Activated CD4-positive, alpha-beta T cell treated with anti-CD3 and anti-CD28 coated beads for 36 hours (primary cell): ENCODE measurements at regions of chr20 and their contacts with region 1.

Region 1: DNA sequence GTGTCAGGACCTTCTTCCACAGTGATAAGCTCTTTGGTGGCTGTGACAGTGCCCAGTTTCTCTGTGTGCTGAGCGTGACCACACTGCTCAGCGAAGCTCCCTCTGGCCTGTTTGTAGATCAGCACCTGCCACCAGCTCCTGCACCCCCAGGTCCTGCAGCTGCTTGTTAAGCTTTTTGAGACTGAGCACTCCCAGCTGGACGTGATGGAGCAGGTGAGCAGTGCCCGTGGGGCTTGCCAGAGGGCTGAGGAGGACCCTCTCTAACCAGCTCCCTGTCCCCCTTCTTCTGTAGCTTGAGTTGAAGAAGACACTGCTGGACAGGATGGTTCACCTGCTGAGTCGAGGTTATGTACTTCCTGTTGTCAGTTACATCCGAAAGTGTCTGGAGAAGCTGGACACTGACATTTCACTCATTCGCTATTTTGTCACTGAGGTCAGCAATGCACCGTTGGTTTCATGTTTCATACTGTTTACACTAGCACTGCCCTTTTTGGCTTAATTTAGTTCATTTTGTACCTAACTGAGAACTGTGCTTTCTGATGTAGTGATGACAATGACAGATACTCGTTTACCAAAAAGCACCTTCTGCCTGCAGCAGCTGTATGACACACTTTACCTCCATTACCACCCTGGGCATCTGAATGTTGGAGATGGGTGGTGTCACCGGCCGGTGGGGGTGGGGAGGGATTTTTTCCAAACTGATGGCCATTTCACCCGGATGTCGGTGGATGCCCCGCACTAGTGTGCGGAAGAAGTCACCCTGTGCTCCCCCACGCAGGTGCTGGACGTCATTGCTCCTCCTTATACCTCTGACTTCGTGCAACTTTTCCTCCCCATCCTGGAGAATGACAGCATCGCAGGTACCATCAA is 12.5 kb downstream of the NELFCD start:
- DNase-seq: no peak
- ATAC-seq: no peak
- H3K4me3 Mint-ChIP-seq: no peak overlapping the region
- H3K27ac Mint-ChIP-seq: peak overlapping the region; percentile 25
- H3K4me1 Mint-ChIP-seq: peaks cover 4% of the 10 kb centered on the region
- H3K27me3 Mint-ChIP-seq: no peaks in the 10 kb centered on the region

Region 2: GRCh38 chr20:59428051-59428830 is 434.7 kb after region 1 on chr20:
- CTCF ChIA-PET with region 1: no interaction called
- POLR2A ChIA-PET with region 1: interaction called, 12 read pairs
- intact Hi-C with region 1: no loop called
- DNase-seq: peak; percentile 20
- ATAC-seq: no peak
- H3K4me3 Mint-ChIP-seq: no peak overlapping the region
- H3K27ac Mint-ChIP-seq: no peak overlapping the region
- H3K4me1 Mint-ChIP-seq: peaks cover 10% of the 10 kb centered on the region
- H3K27me3 Mint-ChIP-seq: no peaks in the 10 kb centered on the region